Dendritic cell treated with granulocyte-macrophage colony-stimulating factor and Interleukin-4, amounts not matched to agents 40 ng/mL and 50 ng/mL, for 4 days (primary cell): ENCODE measurements at regions of chr13 and their contacts with region 1.

Region 1: DNA sequence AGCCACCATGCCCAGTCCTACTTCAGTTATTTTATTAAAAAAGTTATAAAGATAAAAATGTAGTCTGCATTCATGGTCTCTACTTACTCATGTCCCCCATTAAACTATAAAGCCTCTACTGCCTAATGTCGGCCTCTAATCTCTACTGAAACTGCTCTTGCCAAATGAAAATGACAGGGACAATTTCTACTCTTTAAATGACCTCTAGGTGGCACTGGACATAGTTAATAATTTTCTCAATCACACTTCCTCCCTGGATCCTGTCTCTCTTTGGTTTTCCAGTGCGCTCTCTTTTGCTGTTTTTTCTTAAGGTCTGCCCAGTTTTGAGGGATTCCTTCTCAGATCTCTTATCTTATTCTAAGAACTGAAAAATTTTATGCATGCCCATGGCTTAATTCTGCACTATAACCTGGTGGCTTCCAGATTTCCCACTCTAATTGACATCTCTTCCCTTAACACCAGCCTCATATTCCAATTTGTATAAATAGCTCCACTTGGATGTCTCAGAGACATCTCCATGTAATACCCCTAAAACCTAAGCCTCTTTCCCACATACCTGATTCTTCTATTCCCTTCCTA is 54.3 kb downstream of the MTMR6 start:
- H3K4me3 Mint-ChIP-seq: no peak overlapping the region
- H3K27ac Mint-ChIP-seq: no peak overlapping the region
- H3K4me1 Mint-ChIP-seq: peaks cover 15% of the 10 kb centered on the region
- H3K27me3 Mint-ChIP-seq: peaks cover 11% of the 10 kb centered on the region

Region 2: DNA sequence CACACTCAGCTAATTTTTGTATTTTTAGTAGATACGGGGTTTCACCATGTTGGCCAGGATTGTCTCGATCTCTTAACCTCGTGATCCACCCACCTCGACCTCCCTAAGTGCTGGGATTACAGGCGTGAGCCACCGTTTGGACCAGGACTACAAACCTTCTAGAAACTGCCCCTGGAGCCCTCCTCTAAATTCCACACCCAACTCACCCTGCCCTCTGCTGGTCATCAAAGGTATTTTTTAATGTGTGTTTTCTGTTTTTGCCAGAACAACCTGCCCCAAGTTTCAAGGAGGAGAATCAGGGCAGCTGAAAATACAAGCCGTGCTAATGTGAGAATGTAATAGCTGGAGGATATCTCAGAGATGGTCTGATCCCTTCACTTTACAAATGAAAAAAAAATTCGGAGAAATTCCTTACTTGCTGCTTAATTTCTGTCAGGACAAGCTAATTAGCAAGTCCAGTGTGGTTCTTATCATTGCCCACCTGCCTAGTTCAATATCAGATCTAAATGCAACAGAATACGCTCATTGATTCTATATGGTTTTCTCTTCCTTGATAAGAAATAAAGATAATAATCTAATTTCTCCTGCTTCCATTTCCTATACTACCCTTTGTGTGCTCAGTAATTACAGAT is 142.8 kb after region 1 on chr13:
- intact Hi-C with region 1: loop called (anchors 1 kb)
- H3K4me3 Mint-ChIP-seq: no peak overlapping the region
- H3K27ac Mint-ChIP-seq: no peak overlapping the region
- H3K4me1 Mint-ChIP-seq: no peaks in the 10 kb centered on the region
- H3K27me3 Mint-ChIP-seq: peaks cover 50% of the 10 kb centered on the region

Region 3: DNA sequence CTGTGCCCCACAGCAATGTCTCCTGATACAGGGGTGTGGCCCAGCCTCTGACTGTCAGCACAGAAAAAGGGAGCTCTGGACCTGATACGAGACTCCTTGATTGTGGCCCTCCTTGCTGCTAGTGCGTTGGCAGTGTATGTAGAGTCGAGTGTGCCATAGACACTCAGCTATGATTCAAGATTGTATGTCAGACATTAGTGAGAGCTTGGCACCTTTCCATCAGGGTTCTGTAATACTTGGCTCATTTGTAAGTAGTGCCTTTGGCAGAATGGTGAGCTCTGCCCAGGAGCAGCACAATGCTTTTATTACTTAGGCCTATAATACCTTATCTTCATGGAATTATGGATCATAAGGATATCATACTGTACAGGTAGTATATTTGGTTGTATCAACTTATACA is 222.1 kb after region 1 on chr13:
- intact Hi-C with region 1: no loop called
- H3K4me3 Mint-ChIP-seq: no peak overlapping the region
- H3K27ac Mint-ChIP-seq: no peak overlapping the region
- H3K4me1 Mint-ChIP-seq: no peaks in the 10 kb centered on the region
- H3K27me3 Mint-ChIP-seq: peaks cover 2% of the 10 kb centered on the region